PC-9 (cell line): ENCODE measurements at regions of chrX and their contacts with region 1.

Region 1: GRCh38 chrX:17082831-17083230 is 136.4 kb downstream of the REPS2 start:
- DNase-seq: no peak
- H3K4me3 ChIP-seq: no peak overlapping the region
- H3K27ac ChIP-seq: no peak overlapping the region
- H3K4me1 ChIP-seq: 0 out of 2 replicates have a peak, but pooled peaks cover 1% of the 10 kb centered on the region
- H3K27me3 ChIP-seq: no peaks in the 10 kb centered on the region
- CTCF ChIP-seq: peak; percentile 45

Region 2: GRCh38 chrX:16278927-16279326 is 803.9 kb before region 1 on chrX:
- CTCF ChIA-PET with region 1: no interaction called
- POLR2A ChIA-PET with region 1: no interaction called
- intact Hi-C with region 1: no loop called
- DNase-seq: no peak
- H3K4me3 ChIP-seq: no peak overlapping the region
- H3K27ac ChIP-seq: no peak overlapping the region
- H3K4me1 ChIP-seq: no peaks in the 10 kb centered on the region
- H3K27me3 ChIP-seq: no peaks in the 10 kb centered on the region
- CTCF ChIP-seq: no peak

Region 3: GRCh38 chrX:16476692-16477091 is 606.1 kb before region 1 on chrX:
- CTCF ChIA-PET with region 1: interaction called, 11 read pairs
- POLR2A ChIA-PET with region 1: no interaction called
- intact Hi-C with region 1: no loop called
- DNase-seq: no peak
- H3K4me3 ChIP-seq: no peak overlapping the region
- H3K27ac ChIP-seq: no peak overlapping the region
- H3K4me1 ChIP-seq: peaks cover 14% of the 10 kb centered on the region
- H3K27me3 ChIP-seq: no peaks in the 10 kb centered on the region
- CTCF ChIP-seq: no peak

Region 4: DNA sequence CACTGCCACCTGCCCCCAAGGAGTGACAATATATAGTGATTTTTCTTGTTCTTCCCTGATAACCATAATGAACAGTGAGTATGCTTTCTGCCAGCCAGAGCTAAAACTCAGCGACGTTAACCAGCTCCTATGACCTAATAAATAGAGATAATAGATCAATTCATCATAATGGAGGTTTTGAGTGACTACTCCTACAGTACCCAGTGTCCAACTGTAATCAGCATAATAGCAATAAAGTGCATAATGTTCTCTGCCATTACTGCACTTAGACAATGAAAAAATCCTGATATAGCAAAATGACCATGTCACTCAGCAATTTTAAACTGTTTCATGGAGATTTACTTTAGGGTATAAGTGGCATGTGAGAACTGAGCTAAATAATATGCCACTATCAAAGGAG is 317.2 kb before region 1 on chrX:
- CTCF ChIA-PET with region 1: no interaction called
- POLR2A ChIA-PET with region 1: interaction called, 17 read pairs
- intact Hi-C with region 1: no loop called
- DNase-seq: no peak
- H3K4me3 ChIP-seq: no peak overlapping the region
- H3K27ac ChIP-seq: no peak overlapping the region
- H3K4me1 ChIP-seq: 0 out of 2 replicates have a peak, but pooled peaks cover 1% of the 10 kb centered on the region
- H3K27me3 ChIP-seq: no peaks in the 10 kb centered on the region
- CTCF ChIP-seq: no peak

Region 5: DNA sequence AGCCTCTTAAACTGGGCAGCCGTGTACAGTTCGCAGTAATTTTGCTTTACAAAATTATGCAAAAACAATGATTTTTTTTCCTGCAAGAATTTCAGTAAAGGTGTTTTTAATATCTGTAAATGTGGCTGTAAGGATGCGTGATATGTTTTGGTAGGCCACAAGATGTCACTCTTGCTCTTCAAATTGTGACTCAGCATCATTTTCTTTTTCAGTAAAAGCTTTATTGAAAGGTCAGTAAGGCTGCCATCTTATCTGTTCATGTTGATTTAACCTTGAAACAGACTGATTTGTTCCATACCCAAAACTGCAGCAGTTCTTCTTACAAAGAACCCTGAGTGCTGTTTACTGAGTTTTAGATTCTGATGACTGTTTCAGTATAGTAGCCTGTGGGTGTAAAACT is 256.6 kb before region 1 on chrX:
- CTCF ChIA-PET with region 1: interaction called, 5 read pairs
- POLR2A ChIA-PET with region 1: no interaction called
- intact Hi-C with region 1: loop called (anchors 1 kb)
- DNase-seq: peak in 1 of 2 experiments; percentile 46
- H3K4me3 ChIP-seq: no peak overlapping the region
- H3K27ac ChIP-seq: no peak overlapping the region
- H3K4me1 ChIP-seq: no peaks in the 10 kb centered on the region; the same call in 1 of the 2 replicates
- H3K27me3 ChIP-seq: no peaks in the 10 kb centered on the region
- CTCF ChIP-seq: peak; percentile 67

Region 6: GRCh38 chrX:16853537-16853936 is 229.3 kb before region 1 on chrX:
- CTCF ChIA-PET with region 1: interaction called, 11 read pairs
- POLR2A ChIA-PET with region 1: no interaction called
- intact Hi-C with region 1: no loop called
- DNase-seq: no peak
- H3K4me3 ChIP-seq: no peak overlapping the region
- H3K27ac ChIP-seq: no peak overlapping the region
- H3K4me1 ChIP-seq: no peaks in the 10 kb centered on the region
- H3K27me3 ChIP-seq: no peaks in the 10 kb centered on the region
- CTCF ChIP-seq: no peak

Region 7: GRCh38 chrX:16946361-16946964 is 136.4 kb before region 1 on chrX and contains the start of gene REPS2:
- CTCF ChIA-PET with region 1: no interaction called
- POLR2A ChIA-PET with region 1: interaction called, 23 read pairs
- intact Hi-C with region 1: no loop called
- DNase-seq: peak; percentile 77 to 83
- H3K4me3 ChIP-seq: peak within 1 kb of the TSS; percentile 66
- H3K27ac ChIP-seq: no peak within 1 kb of the TSS
- H3K4me1 ChIP-seq: peaks cover 26% of the 10 kb centered on the region; the same call in 1 of the 2 replicates
- H3K27me3 ChIP-seq: no peaks in the 10 kb centered on the region
- CTCF ChIP-seq: no peak
- total RNA-seq, gene REPS2: 15.4 and 29.2 TPM in 2 replicates